ENCODE measurements at regions of chr6 and their contacts with region 1.

Region 1: GRCh38 chr6:41318654-41319565 is 16.5 kb upstream of the NCR2 start:
- DNase-seq: peak; percentile 63 to 91 (median 77)
- ATAC-seq: peak; percentile 96 to 99 (median 97)
- H3K4me3 ChIP-seq: peak overlapping the region; percentile 21 to 49
- H3K4me3 Mint-ChIP-seq: peak overlapping the region; percentile 43 to 58 (median 51)
- H3K27ac ChIP-seq: no peak overlapping the region
- H3K27ac Mint-ChIP-seq: peak overlapping the region in 1 of 2 donors; percentile 32
- H3K4me1 ChIP-seq: peaks cover 3 to 13% of the 10 kb centered on the region in 2 experiments
- H3K4me1 Mint-ChIP-seq: peaks cover 14 to 19% (median 15%) of the 10 kb centered on the region in 3 donors
- H3K27me3 ChIP-seq: peaks cover 0 to 5% of the 10 kb centered on the region in 2 experiments
- H3K27me3 Mint-ChIP-seq: peaks cover 0 to 17% of the 10 kb centered on the region in 2 donors

Region 2: DNA sequence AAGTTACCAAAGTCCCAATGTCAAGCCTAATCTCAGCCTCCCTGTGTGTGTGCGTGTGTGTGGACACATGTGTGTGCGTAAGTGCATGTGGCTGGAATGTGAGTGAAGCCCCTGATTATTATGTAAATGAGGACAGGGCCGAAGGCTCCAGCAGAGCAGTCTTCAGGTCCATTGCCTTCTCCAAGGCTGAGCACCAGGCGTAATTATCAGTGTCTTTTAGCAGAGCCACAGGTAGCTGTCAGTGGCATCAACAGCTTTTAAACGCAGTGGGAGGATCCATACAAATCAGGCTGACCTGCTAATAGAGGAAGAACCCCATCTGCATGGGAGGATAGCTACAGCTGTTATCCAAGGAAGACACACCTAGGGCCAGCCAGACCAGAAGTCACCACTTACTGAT is 1060.4 kb before region 1 on chr6:
- CTCF ChIA-PET with region 1: no interaction called
- POLR2A ChIA-PET with region 1: no interaction called
- DNase-seq: no peak
- ATAC-seq: no peak
- H3K4me3 ChIP-seq: no peak overlapping the region
- H3K4me3 Mint-ChIP-seq: no peak overlapping the region
- H3K27ac ChIP-seq: no peak overlapping the region
- H3K27ac Mint-ChIP-seq: no peak overlapping the region
- H3K4me1 ChIP-seq: no peaks in the 10 kb centered on the region
- H3K4me1 Mint-ChIP-seq: no peaks in the 10 kb centered on the region
- H3K27me3 ChIP-seq: peaks cover 0 to 10% of the 10 kb centered on the region in 2 experiments
- H3K27me3 Mint-ChIP-seq: peaks cover 10 to 21% of the 10 kb centered on the region in 2 donors

Region 3: GRCh38 chr6:41306187-41306854 is 12.6 kb before region 1 on chr6:
- CTCF ChIA-PET with region 1: interaction called, 5 to 13 read pairs
- POLR2A ChIA-PET with region 1: no interaction called
- DNase-seq: peak in 22 of 35 experiments; percentile 7 to 80 (median 25)
- ATAC-seq: no peak
- H3K4me3 ChIP-seq: no peak overlapping the region
- H3K4me3 Mint-ChIP-seq: no peak overlapping the region
- H3K27ac ChIP-seq: no peak overlapping the region
- H3K27ac Mint-ChIP-seq: no peak overlapping the region
- H3K4me1 ChIP-seq: peaks cover 0 to 9% of the 10 kb centered on the region in 2 experiments
- H3K4me1 Mint-ChIP-seq: peaks cover 12 to 22% (median 12%) of the 10 kb centered on the region in 3 donors
- H3K27me3 ChIP-seq: peaks cover 0 to 4% of the 10 kb centered on the region in 2 experiments
- H3K27me3 Mint-ChIP-seq: peaks cover 1% of the 10 kb centered on the region in 2 donors

Region 4: GRCh38 chr6:41334482-41335040 is 15.7 kb after region 1 on chr6:
- CTCF ChIA-PET with region 1: interaction called, 3 to 11 read pairs
- POLR2A ChIA-PET with region 1: no interaction called
- DNase-seq: peak in 1 of 35 experiments; percentile 45
- ATAC-seq: no peak
- H3K4me3 ChIP-seq: no peak overlapping the region
- H3K4me3 Mint-ChIP-seq: peak overlapping the region; percentile 10 to 73 (median 34)
- H3K27ac ChIP-seq: peak overlapping the region; percentile 82
- H3K27ac Mint-ChIP-seq: peak overlapping the region; percentile 77 to 90
- H3K4me1 ChIP-seq: peaks cover 34 to 57% of the 10 kb centered on the region in 2 experiments
- H3K4me1 Mint-ChIP-seq: peaks cover 55 to 58% (median 55%) of the 10 kb centered on the region in 3 donors
- H3K27me3 ChIP-seq: no peaks in the 10 kb centered on the region
- H3K27me3 Mint-ChIP-seq: no peaks in the 10 kb centered on the region

Measured in T-cell (primary cell).